ENCODE measurements at regions of chr1 and their contacts with region 1.

Region 1: GRCh38 chr1:89780721-89781120 is 40.1 kb upstream of the LRRC8D start:
- DNase-seq: peak; percentile 61
- H3K4me3 Mint-ChIP-seq: no peak overlapping the region
- H3K27ac Mint-ChIP-seq: no peak overlapping the region
- H3K4me1 Mint-ChIP-seq: no peaks in the 10 kb centered on the region
- H3K27me3 Mint-ChIP-seq: no peaks in the 10 kb centered on the region
- CTCF ChIP-seq: peak; percentile 38

Region 2: DNA sequence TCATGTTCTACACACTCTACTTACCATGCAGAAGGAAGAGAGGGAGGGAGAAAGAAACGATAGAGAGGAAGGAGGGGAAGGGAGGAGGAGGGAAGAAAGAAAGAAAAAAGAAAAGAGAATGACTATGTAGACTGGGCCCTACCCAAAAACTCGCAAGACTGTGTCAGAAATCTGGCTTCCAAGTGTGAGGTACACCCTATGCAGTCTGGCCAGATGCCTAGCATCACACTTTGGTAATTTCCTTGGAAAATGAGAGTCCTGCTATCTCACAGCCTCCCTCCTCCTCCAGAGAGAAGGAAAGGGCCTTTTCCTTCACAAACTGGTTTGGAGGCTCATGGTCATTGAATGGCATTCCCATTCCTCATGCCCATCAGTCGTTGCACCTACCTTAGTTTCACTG is 46.3 kb before region 1 on chr1:
- CTCF ChIA-PET with region 1: no interaction called
- POLR2A ChIA-PET with region 1: no interaction called
- intact Hi-C with region 1: no loop called
- DNase-seq: no peak
- H3K4me3 Mint-ChIP-seq: no peak overlapping the region
- H3K27ac Mint-ChIP-seq: no peak overlapping the region
- H3K4me1 Mint-ChIP-seq: peaks cover 8% of the 10 kb centered on the region
- H3K27me3 Mint-ChIP-seq: no peaks in the 10 kb centered on the region
- CTCF ChIP-seq: no peak

Region 3: GRCh38 chr1:89794406-89794805 is 13.7 kb after region 1 on chr1:
- CTCF ChIA-PET with region 1: interaction called, 12 read pairs
- POLR2A ChIA-PET with region 1: interaction called, 3 read pairs
- intact Hi-C with region 1: no loop called
- DNase-seq: no peak
- H3K4me3 Mint-ChIP-seq: no peak overlapping the region
- H3K27ac Mint-ChIP-seq: no peak overlapping the region
- H3K4me1 Mint-ChIP-seq: no peaks in the 10 kb centered on the region
- H3K27me3 Mint-ChIP-seq: no peaks in the 10 kb centered on the region
- CTCF ChIP-seq: no peak